MCF 10A (cell line): ENCODE measurements at regions of chr20 and their contacts with region 1.

Region 1: DNA sequence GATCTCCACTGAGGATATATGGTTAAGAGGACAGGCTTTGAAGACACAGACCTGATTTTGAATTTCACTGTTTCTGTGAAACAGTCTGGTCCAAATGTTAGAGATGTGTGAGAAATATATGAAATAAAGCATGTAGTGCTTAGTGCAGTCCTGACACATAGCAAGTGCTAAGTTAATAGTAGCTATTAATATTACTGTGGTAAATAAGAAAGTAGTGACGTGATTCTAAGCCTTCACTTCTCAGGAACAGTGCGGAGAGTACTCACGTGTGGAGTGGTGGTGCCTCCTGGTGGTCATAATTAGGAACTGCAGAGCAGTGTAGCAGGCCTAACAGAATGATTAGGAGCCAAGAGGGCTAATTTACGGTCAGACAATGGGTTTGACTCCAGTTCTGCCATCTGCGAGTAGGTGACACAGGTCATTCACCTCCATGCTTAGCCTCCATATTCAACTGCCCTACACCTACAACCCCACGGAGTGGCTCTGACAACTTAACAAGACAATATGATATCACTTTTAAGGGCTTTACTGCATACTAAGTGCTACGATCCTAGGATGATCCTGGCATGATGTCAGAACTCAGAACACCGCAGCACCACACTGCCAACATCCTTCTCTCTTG is 106.2 kb downstream of the JPH2 start:
- DNase-seq: peak; percentile 85
- H3K4me3 Mint-ChIP-seq: no peak overlapping the region
- H3K27ac Mint-ChIP-seq: no peak overlapping the region
- H3K4me1 Mint-ChIP-seq: peaks cover 12% of the 10 kb centered on the region
- H3K27me3 Mint-ChIP-seq: no peaks in the 10 kb centered on the region
- CTCF ChIP-seq: peak; percentile 96

Region 2: DNA sequence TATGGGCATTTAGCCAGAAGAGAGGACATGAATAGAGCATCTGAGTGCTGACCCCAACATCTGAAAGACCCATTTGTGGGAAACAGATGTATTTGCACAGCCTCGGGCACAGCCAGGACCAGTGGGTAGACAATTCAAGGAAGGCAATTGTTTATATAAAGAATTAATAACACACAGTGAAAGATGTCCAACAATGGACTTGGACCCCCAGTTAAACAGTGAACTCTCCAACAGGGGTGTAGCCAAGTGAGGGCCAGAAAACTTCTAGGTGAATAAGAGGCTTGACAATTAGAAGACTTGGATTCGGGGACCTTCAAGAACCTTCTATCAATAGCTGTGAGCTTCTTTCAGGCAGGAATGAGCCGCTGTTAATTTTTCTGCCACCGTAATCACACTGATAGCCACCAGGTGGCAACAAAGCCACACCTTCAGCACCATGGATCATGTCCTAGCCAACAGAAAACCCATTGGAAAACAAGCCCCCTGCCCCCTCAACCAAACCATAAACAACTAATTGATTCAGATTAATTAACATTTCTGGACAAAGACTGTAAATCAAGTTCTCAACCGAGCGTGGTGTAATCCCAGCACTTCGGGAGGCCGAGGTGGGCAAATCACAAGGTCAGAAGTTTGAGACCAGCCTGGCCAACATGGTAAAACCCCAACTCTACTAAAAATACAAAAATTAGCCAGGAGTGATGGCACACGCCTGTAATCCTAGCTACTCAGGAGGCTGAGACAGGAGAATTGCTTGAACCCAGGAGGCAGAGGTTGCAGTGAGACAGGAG is 631.8 kb before region 1 on chr20:
- CTCF ChIA-PET with region 1: interaction called, 19 read pairs
- POLR2A ChIA-PET with region 1: interaction called, 3 read pairs
- intact Hi-C with region 1: loop called (anchors 1 kb)
- DNase-seq: peak; percentile 56
- H3K4me3 Mint-ChIP-seq: no peak overlapping the region
- H3K27ac Mint-ChIP-seq: no peak overlapping the region
- H3K4me1 Mint-ChIP-seq: no peaks in the 10 kb centered on the region
- H3K27me3 Mint-ChIP-seq: peaks cover 9% of the 10 kb centered on the region
- CTCF ChIP-seq: peak; percentile 82

Region 3: GRCh38 chr20:43767686-43768474 is 312.9 kb before region 1 on chr20:
- CTCF ChIA-PET with region 1: interaction called, 17 read pairs
- POLR2A ChIA-PET with region 1: no interaction called
- intact Hi-C with region 1: no loop called
- DNase-seq: peak; percentile 50
- H3K4me3 Mint-ChIP-seq: no peak overlapping the region
- H3K27ac Mint-ChIP-seq: no peak overlapping the region
- H3K4me1 Mint-ChIP-seq: peaks cover 10% of the 10 kb centered on the region
- H3K27me3 Mint-ChIP-seq: peaks cover 29% of the 10 kb centered on the region
- CTCF ChIP-seq: no peak

Region 4: DNA sequence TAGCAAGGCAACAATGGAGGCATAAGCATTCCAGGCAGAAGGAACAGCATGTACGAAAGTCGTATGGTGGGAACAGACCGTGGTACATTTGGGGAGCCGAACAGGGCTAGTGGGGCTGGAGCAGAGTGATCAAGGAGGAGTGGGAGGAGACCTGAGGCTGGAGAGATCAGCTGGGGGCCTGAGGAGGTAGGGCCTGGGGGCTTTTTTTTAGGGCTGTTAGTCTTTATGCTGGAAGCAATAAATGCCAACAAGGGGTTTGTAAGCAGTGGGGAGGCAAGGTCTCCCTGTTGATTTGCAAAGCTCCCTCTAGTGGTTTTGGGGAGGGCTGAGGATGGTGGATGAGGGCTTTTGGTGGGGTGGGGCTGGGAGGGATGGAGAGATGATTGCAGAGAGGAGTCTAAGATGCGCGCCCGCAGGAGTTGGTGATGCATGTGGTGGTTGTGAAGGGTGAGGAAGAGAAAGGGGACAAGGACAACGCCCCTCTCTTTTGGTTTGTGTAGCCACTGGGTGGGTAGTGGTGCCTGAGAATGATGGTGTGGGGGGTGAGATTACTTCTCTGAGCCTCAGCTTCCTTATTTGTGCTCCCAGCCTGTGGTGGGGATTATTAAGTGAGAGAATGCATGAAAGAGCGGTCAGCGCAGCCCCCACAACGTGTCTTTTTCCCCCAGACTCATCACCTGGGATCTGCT is 240.2 kb before region 1 on chr20:
- CTCF ChIA-PET with region 1: interaction called, 9 read pairs
- POLR2A ChIA-PET with region 1: no interaction called
- intact Hi-C with region 1: loop called (anchors 1 kb)
- DNase-seq: peak; percentile 53
- H3K4me3 Mint-ChIP-seq: no peak overlapping the region
- H3K27ac Mint-ChIP-seq: no peak overlapping the region
- H3K4me1 Mint-ChIP-seq: peaks cover 20% of the 10 kb centered on the region
- H3K27me3 Mint-ChIP-seq: no peaks in the 10 kb centered on the region
- CTCF ChIP-seq: peak; percentile 37

Region 5: GRCh38 chr20:43911066-43911465 is 169.7 kb before region 1 on chr20:
- CTCF ChIA-PET with region 1: interaction called, 6 read pairs
- POLR2A ChIA-PET with region 1: interaction called, 3 read pairs
- intact Hi-C with region 1: loop called (anchors 1 kb)
- DNase-seq: peak; percentile 75
- H3K4me3 Mint-ChIP-seq: no peak overlapping the region
- H3K27ac Mint-ChIP-seq: no peak overlapping the region
- H3K4me1 Mint-ChIP-seq: peaks cover 5% of the 10 kb centered on the region
- H3K27me3 Mint-ChIP-seq: no peaks in the 10 kb centered on the region
- CTCF ChIP-seq: peak; percentile 8

Region 6: DNA sequence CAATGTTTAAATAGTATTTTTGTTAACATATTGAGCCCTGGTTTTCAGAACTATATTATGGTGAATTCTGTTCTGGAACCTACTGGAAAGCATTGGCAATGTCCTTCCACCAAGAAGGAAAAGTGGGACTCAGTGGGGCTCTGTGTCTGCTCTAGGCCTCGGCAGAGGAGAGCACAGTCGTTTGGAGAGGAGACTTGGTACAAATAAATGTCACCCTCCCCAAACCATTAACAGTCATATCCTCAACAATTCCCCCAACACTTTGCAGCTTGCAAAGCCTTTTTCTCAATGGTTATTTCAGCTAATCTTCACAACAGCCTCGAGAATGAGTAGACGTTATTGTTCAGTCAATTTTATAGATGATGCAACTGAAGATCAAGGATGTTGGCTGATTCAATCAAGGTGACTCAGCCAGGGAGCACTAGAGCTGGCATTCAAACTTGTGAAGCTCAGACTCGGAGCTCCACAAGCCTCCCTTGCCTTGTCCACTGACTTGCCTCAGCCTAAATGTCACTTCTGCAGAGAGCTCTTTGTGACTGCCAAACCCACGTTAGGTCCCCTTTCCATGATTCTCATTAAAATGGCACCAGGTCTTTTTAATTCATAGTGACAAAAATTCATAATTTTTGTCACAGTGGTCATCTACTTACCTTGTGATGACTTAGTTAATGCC is 105.5 kb before region 1 on chr20:
- CTCF ChIA-PET with region 1: interaction called, 5 read pairs
- POLR2A ChIA-PET with region 1: no interaction called
- intact Hi-C with region 1: loop called (anchors 5 kb)
- DNase-seq: peak; percentile 86
- H3K4me3 Mint-ChIP-seq: no peak overlapping the region
- H3K27ac Mint-ChIP-seq: peak overlapping the region; percentile 75
- H3K4me1 Mint-ChIP-seq: peaks cover 16% of the 10 kb centered on the region
- H3K27me3 Mint-ChIP-seq: no peaks in the 10 kb centered on the region
- CTCF ChIP-seq: no peak

Region 7: DNA sequence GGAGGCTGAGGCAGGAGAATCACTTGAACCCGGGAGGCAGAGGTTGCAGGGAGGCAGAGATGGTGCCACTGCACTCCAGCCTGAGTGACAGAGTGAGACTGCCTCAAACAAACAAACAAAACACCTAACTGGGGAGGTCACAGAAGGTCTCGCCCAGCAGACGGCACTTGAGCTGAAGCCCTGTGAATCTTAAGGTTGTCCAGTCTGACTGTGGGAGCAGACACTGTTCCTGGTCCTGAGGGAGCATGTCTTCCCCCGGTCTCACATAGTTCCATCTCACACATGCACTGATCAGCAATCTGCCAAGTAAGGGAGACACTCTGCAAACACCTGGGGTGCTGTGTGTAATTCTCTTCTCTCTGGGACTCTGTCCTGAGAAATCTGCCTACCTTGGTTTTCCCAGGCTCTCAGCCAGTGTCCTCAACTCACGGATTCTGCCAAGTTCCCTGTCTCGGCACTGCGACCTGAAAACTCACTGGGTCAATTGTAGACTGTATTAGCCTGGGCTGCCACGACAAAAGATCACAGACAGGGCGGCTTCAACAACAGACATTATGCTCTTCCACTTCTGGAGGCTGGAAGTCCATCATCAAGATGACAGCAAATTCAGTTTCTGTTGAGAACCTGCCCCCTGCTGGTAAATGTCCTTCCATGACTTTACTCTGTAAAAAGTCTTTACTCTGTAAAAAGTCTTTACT is 11.9 kb after region 1 on chr20:
- CTCF ChIA-PET with region 1: interaction called, 32 read pairs
- POLR2A ChIA-PET with region 1: interaction called, 6 read pairs
- intact Hi-C with region 1: no loop called
- DNase-seq: peak; percentile 61
- H3K4me3 Mint-ChIP-seq: no peak overlapping the region
- H3K27ac Mint-ChIP-seq: no peak overlapping the region
- H3K4me1 Mint-ChIP-seq: peaks cover 16% of the 10 kb centered on the region
- H3K27me3 Mint-ChIP-seq: no peaks in the 10 kb centered on the region
- CTCF ChIP-seq: peak; percentile 52